ENCODE measurements at regions of chr13 and their contacts with region 1.

Region 1: GRCh38 chr13:99436686-99437416 is 64.4 kb upstream of the TM9SF2 start:
- DNase-seq: peak; percentile 92 to 98 (median 93)
- ATAC-seq: peak; percentile 69
- H3K4me3 ChIP-seq: peak overlapping the region; percentile 39
- H3K4me3 Mint-ChIP-seq: peak overlapping the region; percentile 17 to 79 (median 68)
- H3K27ac ChIP-seq: peak overlapping the region; percentile 83
- H3K27ac Mint-ChIP-seq: peak overlapping the region; percentile 67 to 99 (median 87)
- H3K4me1 ChIP-seq: peaks cover 43 to 48% of the 10 kb centered on the region in 2 donors
- H3K4me1 Mint-ChIP-seq: peaks cover 28 to 68% (median 59%) of the 10 kb centered on the region in 7 donors
- H3K27me3 ChIP-seq: no peaks in the 10 kb centered on the region
- H3K27me3 Mint-ChIP-seq: peaks cover 0 to 30% (median 0%) of the 10 kb centered on the region in 5 donors

Region 2: GRCh38 chr13:98622931-98623331 is 813.9 kb before region 1 on chr13:
- CTCF ChIA-PET with region 1: no interaction called
- POLR2A ChIA-PET with region 1: no interaction called
- intact Hi-C with region 1: no loop called
- DNase-seq: no peak
- ATAC-seq: no peak
- H3K4me3 ChIP-seq: no peak overlapping the region
- H3K4me3 Mint-ChIP-seq: peak overlapping the region in 1 of 10 donors; percentile 28
- H3K27ac ChIP-seq: no peak overlapping the region
- H3K27ac Mint-ChIP-seq: no peak overlapping the region
- H3K4me1 ChIP-seq: no peaks in the 10 kb centered on the region
- H3K4me1 Mint-ChIP-seq: peaks cover 0 to 6% (median 2%) of the 10 kb centered on the region in 7 donors
- H3K27me3 ChIP-seq: no peaks in the 10 kb centered on the region
- H3K27me3 Mint-ChIP-seq: peaks cover 0 to 3% (median 0%) of the 10 kb centered on the region in 5 donors

Region 3: DNA sequence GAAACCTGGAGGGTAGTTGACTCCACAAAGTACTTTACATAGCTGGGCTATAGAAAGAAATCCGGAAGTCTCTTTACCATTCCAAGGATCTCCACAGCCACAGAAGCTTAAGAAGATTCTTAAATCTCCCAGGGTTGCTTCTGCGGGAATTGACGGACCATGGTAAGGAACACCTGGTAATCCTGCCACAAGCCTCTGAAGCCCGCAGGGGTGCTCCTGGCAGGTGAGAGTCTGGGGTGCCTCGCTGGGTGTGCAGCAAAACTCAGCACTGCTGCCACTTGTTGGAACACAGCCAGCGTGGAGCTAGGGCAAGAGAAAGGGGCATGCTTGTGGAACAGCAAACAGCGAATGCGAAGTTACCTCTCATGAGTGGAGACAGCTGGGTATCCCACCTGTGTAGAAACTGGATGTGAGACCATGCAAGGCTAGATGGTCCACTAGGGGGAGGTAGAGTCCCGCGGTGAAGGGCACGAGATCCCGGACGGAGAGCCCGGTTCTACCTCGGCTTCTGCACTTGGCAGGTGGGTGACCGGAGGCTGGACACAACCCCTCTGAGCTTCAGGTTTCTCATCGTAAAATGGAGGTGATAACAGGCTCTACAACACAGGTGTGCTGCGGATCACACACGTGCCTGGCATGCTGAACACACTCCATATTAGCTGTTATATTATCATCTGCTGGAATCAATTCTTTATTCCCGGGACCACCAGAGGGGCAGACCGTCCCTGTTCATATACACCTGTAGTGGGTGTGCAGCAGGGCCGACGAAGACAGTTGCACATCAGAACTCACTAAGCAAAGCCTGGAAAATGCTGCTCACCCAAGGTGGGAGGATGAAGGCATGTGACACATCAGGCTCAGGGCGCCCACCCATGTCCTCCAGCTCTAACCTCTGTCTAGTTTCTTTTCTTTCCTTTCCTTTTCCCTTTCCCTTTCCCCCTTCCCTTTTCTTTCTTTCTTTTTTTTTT is 260.3 kb before region 1 on chr13:
- CTCF ChIA-PET with region 1: interaction called, 15 read pairs
- POLR2A ChIA-PET with region 1: interaction called, 3 read pairs
- intact Hi-C with region 1: loop called (anchors 1 kb)
- DNase-seq: peak; percentile 54 to 79 (median 71)
- ATAC-seq: peak; percentile 95
- H3K4me3 ChIP-seq: peak overlapping the region; percentile 1
- H3K4me3 Mint-ChIP-seq: peak overlapping the region; percentile 39 to 81 (median 72)
- H3K27ac ChIP-seq: no peak overlapping the region
- H3K27ac Mint-ChIP-seq: peak overlapping the region in 8 of 9 donors; percentile 34 to 77 (median 54)
- H3K4me1 ChIP-seq: peaks cover 22 to 24% of the 10 kb centered on the region in 2 donors
- H3K4me1 Mint-ChIP-seq: peaks cover 26 to 44% (median 39%) of the 10 kb centered on the region in 7 donors
- H3K27me3 ChIP-seq: no peaks in the 10 kb centered on the region
- H3K27me3 Mint-ChIP-seq: peaks cover 0 to 13% (median 0%) of the 10 kb centered on the region in 5 donors

Region 4: GRCh38 chr13:99275093-99275469 is 161.8 kb before region 1 on chr13:
- CTCF ChIA-PET with region 1: interaction called, 258 read pairs
- POLR2A ChIA-PET with region 1: interaction called, 55 read pairs
- intact Hi-C with region 1: no loop called
- DNase-seq: peak in 4 of 9 donors; percentile 33 to 41 (median 38)
- ATAC-seq: peak; percentile 52
- H3K4me3 ChIP-seq: peak overlapping the region; percentile 5
- H3K4me3 Mint-ChIP-seq: peak overlapping the region; percentile 31 to 77 (median 67)
- H3K27ac ChIP-seq: peak overlapping the region; percentile 49
- H3K27ac Mint-ChIP-seq: peak overlapping the region; percentile 83 to 95 (median 92)
- H3K4me1 ChIP-seq: peaks cover 61 to 89% of the 10 kb centered on the region in 2 donors
- H3K4me1 Mint-ChIP-seq: peaks cover 64 to 100% (median 98%) of the 10 kb centered on the region in 7 donors
- H3K27me3 ChIP-seq: no peaks in the 10 kb centered on the region
- H3K27me3 Mint-ChIP-seq: no peaks in the 10 kb centered on the region

Region 5: DNA sequence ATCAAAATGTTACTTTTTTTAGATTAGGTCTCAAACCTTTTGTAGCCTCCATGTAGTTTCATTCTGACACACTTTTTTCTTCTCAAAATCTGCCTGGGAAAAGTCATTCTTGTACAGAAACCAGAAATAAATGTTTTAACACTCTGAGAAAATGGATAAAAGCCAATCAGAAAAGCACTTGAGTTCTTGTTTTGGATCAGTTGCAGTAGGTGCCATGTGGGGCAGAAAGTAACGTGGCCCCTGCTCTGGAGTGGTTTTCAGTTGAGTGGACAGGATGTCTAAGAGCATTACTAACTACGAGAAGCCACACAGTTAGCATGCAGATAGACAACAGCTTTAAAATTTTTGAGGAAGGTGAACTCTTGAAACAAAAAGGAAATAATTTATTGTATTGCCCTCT is 148.8 kb before region 1 on chr13:
- CTCF ChIA-PET with region 1: interaction called, 15 read pairs
- POLR2A ChIA-PET with region 1: interaction called, 14 read pairs
- intact Hi-C with region 1: no loop called
- DNase-seq: no peak
- ATAC-seq: no peak
- H3K4me3 ChIP-seq: no peak overlapping the region
- H3K4me3 Mint-ChIP-seq: peak overlapping the region in 8 of 10 donors; percentile 3 to 76 (median 54)
- H3K27ac ChIP-seq: peak overlapping the region; percentile 32
- H3K27ac Mint-ChIP-seq: peak overlapping the region; percentile 60 to 96 (median 89)
- H3K4me1 ChIP-seq: peaks cover 69 to 79% of the 10 kb centered on the region in 2 donors
- H3K4me1 Mint-ChIP-seq: peaks cover 64 to 97% (median 93%) of the 10 kb centered on the region in 7 donors
- H3K27me3 ChIP-seq: no peaks in the 10 kb centered on the region
- H3K27me3 Mint-ChIP-seq: no peaks in the 10 kb centered on the region

Region 6: GRCh38 chr13:99366075-99366987 is 70.5 kb before region 1 on chr13:
- CTCF ChIA-PET with region 1: interaction called, 15 read pairs
- POLR2A ChIA-PET with region 1: interaction called, 10 read pairs
- intact Hi-C with region 1: no loop called
- DNase-seq: peak in 2 of 9 donors; percentile 21 to 41
- ATAC-seq: peak; percentile 30
- H3K4me3 ChIP-seq: peak overlapping the region; percentile 6
- H3K4me3 Mint-ChIP-seq: peak overlapping the region in 9 of 10 donors; percentile 46 to 87 (median 78)
- H3K27ac ChIP-seq: peak overlapping the region; percentile 78
- H3K27ac Mint-ChIP-seq: peak overlapping the region; percentile 50 to 100 (median 99)
- H3K4me1 ChIP-seq: peaks cover 76 to 81% of the 10 kb centered on the region in 2 donors
- H3K4me1 Mint-ChIP-seq: peaks cover 55 to 100% (median 95%) of the 10 kb centered on the region in 7 donors
- H3K27me3 ChIP-seq: no peaks in the 10 kb centered on the region
- H3K27me3 Mint-ChIP-seq: no peaks in the 10 kb centered on the region

Region 7: GRCh38 chr13:99417201-99418102 is 19.4 kb before region 1 on chr13:
- CTCF ChIA-PET with region 1: interaction called, 95 read pairs
- POLR2A ChIA-PET with region 1: interaction called, 84 read pairs
- intact Hi-C with region 1: loop called (anchors 1 to 2 kb)
- DNase-seq: peak in 7 of 9 donors; percentile 58 to 78 (median 77)
- ATAC-seq: peak; percentile 40
- H3K4me3 ChIP-seq: peak overlapping the region; percentile 65
- H3K4me3 Mint-ChIP-seq: peak overlapping the region in 1 of 10 donors; percentile 50
- H3K27ac ChIP-seq: peak overlapping the region; percentile 91
- H3K27ac Mint-ChIP-seq: peak overlapping the region in 1 of 9 donors; percentile 26
- H3K4me1 ChIP-seq: peaks cover 18 to 78% of the 10 kb centered on the region in 2 donors
- H3K4me1 Mint-ChIP-seq: peaks cover 32 to 64% (median 49%) of the 10 kb centered on the region in 7 donors
- H3K27me3 ChIP-seq: no peaks in the 10 kb centered on the region
- H3K27me3 Mint-ChIP-seq: peaks cover 0 to 4% (median 0%) of the 10 kb centered on the region in 5 donors

Region 8: DNA sequence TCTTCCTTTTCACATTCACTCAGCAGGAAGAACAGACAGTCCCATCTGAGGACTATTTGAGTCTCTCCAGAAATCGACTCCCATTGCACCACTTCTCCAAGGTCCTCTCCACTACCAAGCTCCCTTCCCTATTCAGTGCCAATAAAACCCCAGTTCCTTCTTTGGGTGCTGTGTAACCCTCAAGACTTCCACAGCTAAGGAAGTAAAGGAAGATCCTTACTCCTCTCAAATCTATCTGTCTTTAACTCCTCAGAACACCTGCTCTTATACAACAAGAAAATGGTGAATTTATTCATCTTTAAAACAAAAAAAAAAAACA is 35.2 kb after region 1 on chr13:
- CTCF ChIA-PET with region 1: no interaction called
- POLR2A ChIA-PET with region 1: no interaction called
- intact Hi-C with region 1: no loop called
- DNase-seq: no peak
- ATAC-seq: no peak
- H3K4me3 ChIP-seq: no peak overlapping the region
- H3K4me3 Mint-ChIP-seq: no peak overlapping the region
- H3K27ac ChIP-seq: no peak overlapping the region
- H3K27ac Mint-ChIP-seq: no peak overlapping the region
- H3K4me1 ChIP-seq: no peaks in the 10 kb centered on the region
- H3K4me1 Mint-ChIP-seq: peaks cover 0 to 8% (median 3%) of the 10 kb centered on the region in 7 donors
- H3K27me3 ChIP-seq: no peaks in the 10 kb centered on the region
- H3K27me3 Mint-ChIP-seq: peaks cover 0 to 28% (median 0%) of the 10 kb centered on the region in 5 donors

Measured in naive thymus-derived CD4-positive, alpha-beta T cell (primary cell).